ENCODE measurements at regions of chr4 and their contacts with region 1.

Region 1: DNA sequence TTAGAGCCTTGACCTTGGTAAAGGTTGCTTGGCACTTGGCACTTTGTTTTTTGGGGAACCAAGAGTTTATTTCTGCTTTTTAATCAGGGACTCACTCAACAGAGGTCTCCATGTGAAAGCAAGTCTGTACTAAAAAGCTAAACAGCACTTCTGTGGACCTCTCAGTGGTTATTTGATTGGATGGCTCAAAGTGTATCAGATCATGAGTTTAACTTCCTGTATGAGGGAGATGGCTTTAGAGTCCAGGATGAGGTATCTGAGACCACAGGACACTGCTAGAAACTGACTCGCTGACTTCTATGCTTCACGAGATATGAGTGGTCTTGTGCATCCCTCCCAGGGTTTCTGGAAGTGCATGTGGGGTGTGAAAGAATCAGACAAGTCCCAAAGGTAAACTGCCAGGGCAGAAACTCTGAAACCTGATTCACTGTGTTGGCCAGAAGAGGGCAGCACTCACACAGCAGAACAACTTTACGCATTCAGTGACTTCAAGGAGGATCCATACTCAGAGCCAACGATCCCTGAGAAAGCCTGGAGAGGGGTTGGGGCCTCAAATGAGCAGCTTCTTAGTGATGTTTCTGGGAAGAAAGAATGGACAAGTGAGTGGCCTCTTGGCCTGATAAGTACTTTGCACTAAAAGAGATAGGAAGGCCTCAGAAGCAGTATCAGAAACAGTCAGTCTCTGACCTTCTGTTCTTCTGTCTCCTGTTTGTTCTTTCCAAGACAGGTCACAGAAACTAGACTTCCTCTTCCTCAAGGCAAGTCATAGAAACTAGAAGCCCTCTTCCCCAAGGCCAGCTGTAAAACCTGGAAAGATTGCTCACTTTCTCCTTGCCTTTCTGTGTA is 220.3 kb upstream of the CXCL13 start:
- DNase-seq: peak; percentile 32 to 77 (median 44)
- ATAC-seq: peak; percentile 82 to 99 (median 96)
- H3K4me3 ChIP-seq: no peak overlapping the region
- H3K27ac ChIP-seq: no peak overlapping the region
- H3K4me1 ChIP-seq: no peaks in the 10 kb centered on the region
- H3K27me3 ChIP-seq: no peaks in the 10 kb centered on the region
- CTCF ChIP-seq: peak; percentile 64 to 82 (median 77)

Region 2: GRCh38 chr4:77146186-77147078 is 238.9 kb before region 1 on chr4:
- intact Hi-C with region 1: no loop called
- DNase-seq: no peak
- ATAC-seq: peak; percentile 49 to 74 (median 72)
- H3K4me3 ChIP-seq: no peak overlapping the region
- H3K27ac ChIP-seq: peak overlapping the region in 2 of 4 donors; percentile 11 to 35
- H3K4me1 ChIP-seq: peaks cover 16 to 25% (median 22%) of the 10 kb centered on the region in 3 donors
- H3K27me3 ChIP-seq: no peaks in the 10 kb centered on the region
- CTCF ChIP-seq: no peak

Region 3: DNA sequence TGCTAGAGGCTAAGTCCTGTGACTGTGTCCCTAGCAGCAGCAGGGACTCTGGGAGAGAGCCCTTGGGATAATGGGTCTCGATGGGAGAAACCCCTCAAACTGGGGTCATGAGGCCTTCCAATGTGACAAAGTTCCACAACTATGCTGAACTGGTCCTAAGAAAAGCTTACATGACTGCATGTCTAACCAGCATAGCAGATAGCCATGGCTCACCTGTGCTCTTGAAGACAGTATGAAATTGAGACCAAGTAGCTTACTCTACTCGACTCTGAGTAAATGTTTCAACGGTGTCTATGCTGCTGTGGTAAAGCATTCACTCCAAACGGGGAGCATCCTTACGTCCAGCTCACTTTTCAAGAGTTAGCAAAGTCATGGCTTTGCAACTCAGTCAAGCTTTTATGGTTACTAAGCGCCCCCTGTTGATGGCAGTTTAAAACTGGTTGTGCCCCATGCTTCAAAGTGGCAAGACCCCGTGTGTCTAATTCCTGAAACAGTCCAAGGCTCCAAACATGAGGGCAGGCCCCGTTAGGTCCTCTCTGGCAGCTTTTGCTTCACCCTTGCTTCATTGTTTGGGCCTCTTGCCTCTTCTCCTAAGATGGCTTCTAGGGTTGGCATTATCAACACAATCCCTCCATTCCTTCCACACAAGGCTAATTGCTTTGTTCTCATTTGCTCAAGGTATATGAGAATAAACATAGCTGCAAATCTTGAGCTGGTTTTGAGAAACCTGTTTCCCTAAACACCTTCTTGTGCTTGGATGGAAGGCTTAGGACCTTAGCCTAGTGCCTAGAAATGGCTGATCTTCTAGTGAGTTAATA is 181.8 kb before region 1 on chr4:
- intact Hi-C with region 1: no loop called
- DNase-seq: peak in 5 of 6 donors; percentile 42 to 73 (median 56)
- ATAC-seq: peak; percentile 63 to 96 (median 92)
- H3K4me3 ChIP-seq: no peak overlapping the region
- H3K27ac ChIP-seq: no peak overlapping the region
- H3K4me1 ChIP-seq: no peaks in the 10 kb centered on the region
- H3K27me3 ChIP-seq: no peaks in the 10 kb centered on the region
- CTCF ChIP-seq: peak; percentile 33 to 58 (median 52)

Region 4: GRCh38 chr4:77433418-77433733 is 48.0 kb after region 1 on chr4:
- intact Hi-C with region 1: loop called in 1 of 3 experiments (anchors 10 kb)
- DNase-seq: peak in 2 of 6 donors; percentile 15 to 34
- ATAC-seq: peak; percentile 78 to 95 (median 94)
- H3K4me3 ChIP-seq: no peak overlapping the region
- H3K27ac ChIP-seq: no peak overlapping the region
- H3K4me1 ChIP-seq: peaks cover 0 to 8% (median 5%) of the 10 kb centered on the region in 3 donors
- H3K27me3 ChIP-seq: no peaks in the 10 kb centered on the region
- CTCF ChIP-seq: peak in 3 of 4 donors; percentile 39 to 56 (median 41)

Region 5: GRCh38 chr4:77449171-77449570 is 63.8 kb after region 1 on chr4:
- intact Hi-C with region 1: no loop called
- DNase-seq: no peak
- ATAC-seq: no peak
- H3K4me3 ChIP-seq: no peak overlapping the region
- H3K27ac ChIP-seq: no peak overlapping the region
- H3K4me1 ChIP-seq: no peaks in the 10 kb centered on the region
- H3K27me3 ChIP-seq: no peaks in the 10 kb centered on the region
- CTCF ChIP-seq: no peak

Region 6: DNA sequence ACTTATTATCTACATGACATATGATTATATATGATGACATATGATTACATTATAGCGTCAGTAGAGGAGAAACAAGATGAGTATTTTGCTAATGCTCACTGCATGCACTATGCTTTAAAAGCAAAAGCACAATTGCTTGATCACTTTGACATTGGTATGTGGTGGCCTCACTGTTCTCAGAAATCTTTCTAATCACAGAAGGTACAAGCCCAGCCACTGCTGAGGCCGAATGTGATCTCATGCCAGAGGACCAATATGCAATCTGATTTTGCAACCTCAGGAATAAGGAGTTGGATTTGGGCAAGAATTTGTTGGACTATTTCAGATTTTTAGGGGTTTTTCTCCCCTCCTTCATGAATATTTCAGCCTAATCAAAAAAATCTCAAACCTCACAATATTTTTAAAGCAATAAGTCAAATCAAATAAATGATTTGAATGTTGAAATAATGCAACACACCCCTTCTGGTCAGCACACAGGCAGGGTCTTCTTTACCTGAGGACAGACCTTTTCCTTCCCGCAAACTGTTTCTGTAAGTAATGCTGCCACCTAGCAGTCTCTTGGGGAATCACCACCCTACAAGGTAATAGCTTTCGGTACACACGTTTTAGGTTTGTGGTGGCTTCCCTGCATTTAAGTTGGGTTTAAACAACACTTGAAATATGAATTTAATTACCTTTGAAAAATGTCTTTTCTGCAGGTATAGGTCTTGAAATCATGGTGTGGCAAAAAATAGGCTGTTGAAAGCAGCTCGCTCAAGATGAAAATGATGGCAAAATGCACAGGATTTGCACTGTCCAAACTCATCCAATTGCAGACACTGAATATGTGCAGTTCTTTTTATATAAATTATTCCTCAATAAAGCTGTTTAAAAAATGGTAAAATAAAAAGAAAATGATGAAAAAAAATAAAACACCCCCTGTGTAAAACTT is 215.4 kb after region 1 on chr4:
- intact Hi-C with region 1: loop called in 2 of 3 experiments (anchors 10 kb)
- DNase-seq: peak in 1 of 6 donors; percentile 43
- ATAC-seq: peak; percentile 74 to 92 (median 82)
- H3K4me3 ChIP-seq: no peak overlapping the region
- H3K27ac ChIP-seq: no peak overlapping the region
- H3K4me1 ChIP-seq: no peaks in the 10 kb centered on the region
- H3K27me3 ChIP-seq: no peaks in the 10 kb centered on the region
- CTCF ChIP-seq: peak; percentile 26 to 69 (median 46)

Region 7: DNA sequence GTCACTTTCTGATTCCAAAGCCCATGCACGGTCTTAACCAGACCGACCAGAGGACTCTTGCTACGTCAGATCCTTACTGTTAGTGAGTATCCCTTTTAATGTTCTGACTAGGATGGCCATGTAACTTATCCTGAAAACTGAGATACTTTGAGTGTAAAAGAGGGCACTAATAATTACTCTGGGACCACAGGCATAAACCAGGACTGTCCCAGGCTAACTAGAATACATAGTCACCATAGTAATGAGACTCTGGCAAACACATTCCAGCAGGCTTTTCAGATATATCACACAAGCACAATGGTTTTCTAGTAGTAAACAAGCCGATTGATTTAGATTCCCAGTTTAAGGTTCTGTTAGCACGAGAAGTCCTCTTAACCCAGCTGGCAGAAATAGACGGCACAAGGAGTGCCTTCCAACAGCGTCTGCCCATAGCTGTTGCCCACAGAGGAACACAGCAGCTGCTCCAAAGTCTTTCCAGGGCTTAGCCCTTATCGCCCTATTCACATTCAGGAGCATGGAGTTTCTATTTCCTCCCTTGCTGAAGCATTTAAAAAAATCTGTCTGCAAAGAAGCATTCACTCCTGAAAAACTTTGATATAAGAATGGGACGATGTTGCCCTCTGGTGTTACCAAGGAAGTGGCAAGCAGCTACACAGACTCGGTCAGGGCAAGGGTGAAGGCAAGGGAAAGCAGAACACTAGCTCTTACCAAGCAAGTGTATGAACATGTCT is 312.7 kb after region 1 on chr4:
- intact Hi-C with region 1: loop called in 1 of 3 experiments (anchors 10 kb)
- DNase-seq: peak in 4 of 6 donors; percentile 32 to 63 (median 58)
- ATAC-seq: peak; percentile 92 to 97 (median 96)
- H3K4me3 ChIP-seq: peak overlapping the region in 2 of 4 donors; percentile 10 to 19
- H3K27ac ChIP-seq: peak overlapping the region in 3 of 4 donors; percentile 35 to 70 (median 68)
- H3K4me1 ChIP-seq: peaks cover 0 to 3% (median 0%) of the 10 kb centered on the region in 3 donors
- H3K27me3 ChIP-seq: no peaks in the 10 kb centered on the region
- CTCF ChIP-seq: peak in 3 of 4 donors; percentile 36 to 47 (median 44)

Measured in pancreas (tissue), 10 donors.